ENCODE measurements at regions of chr3 and their contacts with region 1.

Region 1: GRCh38 chr3:52272831-52273230 is 5.6 kb downstream of the WDR82 start:
- DNase-seq: peak in 1 of 10 donors; percentile 37
- ATAC-seq: peak; percentile 35 to 53
- H3K4me3 Mint-ChIP-seq: peak overlapping the region; percentile 92 to 100 (median 96)
- H3K27ac Mint-ChIP-seq: peak overlapping the region; percentile 91 to 99 (median 97)
- H3K4me1 Mint-ChIP-seq: peaks cover 36 to 95% (median 72%) of the 10 kb centered on the region in 4 donors
- H3K27me3 Mint-ChIP-seq: no peaks in the 10 kb centered on the region

Region 2: GRCh38 chr3:52208556-52208955 is 64.3 kb before region 1 on chr3:
- POLR2A ChIA-PET with region 1: no interaction called
- DNase-seq: no peak
- ATAC-seq: no peak
- H3K4me3 Mint-ChIP-seq: no peak overlapping the region
- H3K27ac Mint-ChIP-seq: peak overlapping the region in 1 of 10 donors; percentile 75
- H3K4me1 Mint-ChIP-seq: peaks cover 0 to 8% (median 2%) of the 10 kb centered on the region in 4 donors
- H3K27me3 Mint-ChIP-seq: no peaks in the 10 kb centered on the region

Region 3: DNA sequence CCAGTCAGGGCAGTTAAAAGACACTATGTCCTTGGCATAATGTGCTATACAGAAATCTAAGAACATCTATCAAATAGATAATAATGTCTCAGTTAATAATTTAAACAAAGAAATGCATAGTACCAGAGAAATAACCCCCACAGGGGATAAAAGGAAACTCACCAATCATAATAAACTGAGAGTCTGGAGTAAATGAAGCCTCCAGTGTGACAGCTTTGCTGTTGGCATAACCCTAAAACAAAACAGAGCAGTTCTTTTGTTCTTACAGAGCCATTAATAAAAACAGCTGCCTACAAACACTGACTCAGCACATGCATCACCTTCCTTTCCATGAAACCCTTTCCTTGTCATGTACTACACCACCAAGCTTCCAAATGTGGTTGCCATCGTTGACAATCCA is 13.8 kb before region 1 on chr3:
- POLR2A ChIA-PET with region 1: interaction called, 1,841 read pairs
- DNase-seq: no peak
- ATAC-seq: no peak
- H3K4me3 Mint-ChIP-seq: peak overlapping the region in 3 of 10 donors; percentile 11 to 45 (median 23)
- H3K27ac Mint-ChIP-seq: peak overlapping the region; percentile 57 to 100 (median 87)
- H3K4me1 Mint-ChIP-seq: peaks cover 31 to 99% (median 95%) of the 10 kb centered on the region in 4 donors
- H3K27me3 Mint-ChIP-seq: no peaks in the 10 kb centered on the region